ENCODE measurements at regions of chr2 and their contacts with region 1.

Region 1: DNA sequence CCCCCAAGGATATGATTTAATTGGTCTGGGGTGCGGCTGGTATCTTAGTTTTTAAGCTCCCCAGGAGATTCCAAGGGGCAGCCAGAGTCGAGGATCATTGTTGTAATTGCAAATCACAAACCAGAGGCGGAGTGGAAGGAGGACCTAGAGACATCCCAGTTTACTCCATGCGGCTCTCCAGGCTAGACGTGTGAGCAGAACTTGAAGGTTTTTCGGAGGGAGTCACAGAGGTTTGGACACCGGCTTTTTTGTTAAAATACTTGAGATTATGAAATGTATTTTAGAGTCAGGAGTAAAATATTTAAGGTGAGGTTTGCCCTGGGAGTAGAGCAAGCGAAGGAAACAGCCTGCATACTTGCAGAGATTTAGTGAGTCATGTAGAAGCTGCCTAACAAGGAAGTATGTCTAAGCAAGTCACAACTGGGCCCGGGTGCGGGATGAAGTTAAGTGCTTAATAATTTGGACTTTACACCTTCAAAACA is 39.5 kb downstream of the TGOLN2 start:
- DNase-seq: no peak
- H3K4me3 ChIP-seq: no peak overlapping the region
- H3K27ac ChIP-seq: peak overlapping the region in 1 of 2 donors; percentile 41
- H3K4me1 ChIP-seq: peaks cover 0 to 5% of the 10 kb centered on the region in 2 donors
- H3K27me3 ChIP-seq: no peaks in the 10 kb centered on the region
- CTCF ChIP-seq: no peak
- POLR2A ChIP-seq: no peak

Region 2: DNA sequence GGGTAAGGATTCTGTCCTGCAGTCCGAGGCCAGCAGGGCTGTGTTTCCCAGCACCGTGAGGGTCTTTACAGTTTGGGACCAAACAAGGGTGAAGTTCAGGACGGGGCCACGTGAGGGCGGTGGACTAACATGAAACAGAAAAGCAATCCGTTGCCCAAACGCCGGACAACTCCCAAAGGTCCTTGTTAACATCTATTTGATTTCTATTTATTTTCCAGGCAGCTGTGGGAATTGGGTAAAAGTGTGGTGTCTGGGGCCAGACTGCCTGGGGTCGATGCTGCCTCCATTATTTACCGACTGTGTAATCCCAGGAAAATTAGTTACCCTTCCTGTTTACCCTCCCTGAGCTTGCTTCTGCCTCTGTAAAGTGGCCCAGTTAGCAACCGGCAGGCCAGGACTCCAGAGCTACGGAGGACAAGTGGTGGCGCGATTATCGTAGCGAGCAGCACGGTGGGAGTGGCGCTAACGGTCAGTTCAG is 221.4 kb before region 1 on chr2:
- intact Hi-C with region 1: loop called (anchors 5 kb)
- DNase-seq: peak; percentile 55 to 77
- H3K4me3 ChIP-seq: peak overlapping the region; percentile 13 to 58 (median 37)
- H3K27ac ChIP-seq: no peak overlapping the region
- H3K4me1 ChIP-seq: no peaks in the 10 kb centered on the region
- H3K27me3 ChIP-seq: no peaks in the 10 kb centered on the region
- CTCF ChIP-seq: peak; percentile 54 to 86 (median 76)
- POLR2A ChIP-seq: no peak

Region 3: DNA sequence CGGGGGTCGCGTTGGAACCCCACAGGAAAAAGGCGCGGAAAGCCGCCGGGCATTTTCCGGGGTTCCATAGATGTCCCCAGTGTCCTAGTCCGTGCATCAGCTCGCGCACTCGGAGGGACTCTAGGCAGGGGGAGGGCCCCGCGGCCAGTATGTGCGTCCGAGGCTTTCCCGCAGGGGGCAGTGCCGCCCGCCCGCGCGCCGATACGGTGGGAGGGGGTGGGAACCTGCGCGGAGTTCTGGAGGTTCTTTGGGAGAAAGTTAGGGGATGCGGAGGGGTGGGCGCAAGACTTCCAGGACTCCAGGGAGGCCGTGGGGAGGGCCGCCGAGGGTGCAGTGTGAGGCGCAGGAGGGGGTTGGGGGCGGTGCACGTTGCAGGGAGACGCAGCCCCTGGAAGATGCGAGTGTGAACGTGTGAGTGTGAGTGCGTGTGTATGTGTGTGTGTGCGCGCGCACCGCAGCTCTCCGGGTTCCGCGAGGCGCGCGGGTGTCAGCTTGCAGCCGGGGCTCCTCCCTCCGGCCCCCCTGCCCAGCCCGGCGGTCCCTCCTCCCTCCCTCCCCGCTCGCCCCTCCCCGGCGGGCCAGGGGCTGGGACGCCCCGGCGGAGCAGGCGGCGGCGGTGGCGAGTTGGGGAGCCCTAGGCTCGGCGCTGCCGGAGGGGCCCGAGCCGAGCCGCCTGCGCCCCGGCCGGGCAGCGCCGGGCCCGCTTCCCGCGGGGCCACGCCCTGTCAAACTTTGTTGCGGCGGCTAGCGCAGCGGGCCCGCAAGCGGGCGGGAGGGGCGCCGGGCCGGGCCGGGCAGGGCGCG is 155.2 kb before region 1 on chr2 and contains the start of gene TCF7L1:
- intact Hi-C with region 1: loop called (anchors 5 kb)
- DNase-seq: peak; percentile 76 to 81
- H3K4me3 ChIP-seq: peak within 1 kb of the TSS; percentile 87 to 93 (median 92)
- H3K27ac ChIP-seq: peak within 1 kb of the TSS; percentile 80 to 94
- H3K4me1 ChIP-seq: peaks cover 0 to 10% of the 10 kb centered on the region in 2 donors
- H3K27me3 ChIP-seq: no peaks in the 10 kb centered on the region
- CTCF ChIP-seq: peak; percentile 49 to 91 (median 75)
- POLR2A ChIP-seq: no peak
- total RNA-seq, gene TCF7L1: 3.4 to 6.9 (median 5.9) TPM

Measured in breast epithelium (tissue), 4 donors.